ENCODE measurements at regions of chr6 and their contacts with region 1.

Region 1: GRCh38 chr6:33391278-33391921 is at the start of gene KIFC1:
- DNase-seq: peak; percentile 100
- ATAC-seq: peak; percentile 97
- H3K4me3 Mint-ChIP-seq: peak within 1 kb of the TSS; percentile 99
- H3K27ac Mint-ChIP-seq: peak within 1 kb of the TSS; percentile 96
- H3K4me1 Mint-ChIP-seq: peaks cover 45% of the 10 kb centered on the region
- H3K27me3 Mint-ChIP-seq: peaks cover 2% of the 10 kb centered on the region
- total RNA-seq, gene KIFC1: 175 to 180 TPM

Region 2: GRCh38 chr6:33317669-33318425 is 73.6 kb before region 1 on chr6 and contains the start of gene ZBTB22:
- CTCF ChIA-PET with region 1: interaction called, 11 read pairs
- POLR2A ChIA-PET with region 1: no interaction called
- DNase-seq: peak; percentile 98
- ATAC-seq: peak; percentile 70
- H3K4me3 Mint-ChIP-seq: peak within 1 kb of the TSS; percentile 97
- H3K27ac Mint-ChIP-seq: peak within 1 kb of the TSS; percentile 96
- H3K4me1 Mint-ChIP-seq: peaks cover 78% of the 10 kb centered on the region
- H3K27me3 Mint-ChIP-seq: no peaks in the 10 kb centered on the region
- total RNA-seq, gene ZBTB22: 10.7 to 11.1 TPM

Region 3: GRCh38 chr6:33344701-33345697 is 46.4 kb before region 1 on chr6:
- CTCF ChIA-PET with region 1: interaction called, 16 read pairs
- POLR2A ChIA-PET with region 1: no interaction called
- DNase-seq: peak; percentile 85
- ATAC-seq: peak; percentile 68
- H3K4me3 Mint-ChIP-seq: peak overlapping the region; percentile 69
- H3K27ac Mint-ChIP-seq: peak overlapping the region; percentile 94
- H3K4me1 Mint-ChIP-seq: peaks cover 40% of the 10 kb centered on the region
- H3K27me3 Mint-ChIP-seq: no peaks in the 10 kb centered on the region

Region 4: GRCh38 chr6:33375143-33375671 is 16.2 kb before region 1 on chr6:
- CTCF ChIA-PET with region 1: interaction called, 20 read pairs
- POLR2A ChIA-PET with region 1: no interaction called
- DNase-seq: no peak
- ATAC-seq: no peak
- H3K4me3 Mint-ChIP-seq: no peak overlapping the region
- H3K27ac Mint-ChIP-seq: no peak overlapping the region
- H3K4me1 Mint-ChIP-seq: peaks cover 31% of the 10 kb centered on the region
- H3K27me3 Mint-ChIP-seq: no peaks in the 10 kb centered on the region

Region 5: DNA sequence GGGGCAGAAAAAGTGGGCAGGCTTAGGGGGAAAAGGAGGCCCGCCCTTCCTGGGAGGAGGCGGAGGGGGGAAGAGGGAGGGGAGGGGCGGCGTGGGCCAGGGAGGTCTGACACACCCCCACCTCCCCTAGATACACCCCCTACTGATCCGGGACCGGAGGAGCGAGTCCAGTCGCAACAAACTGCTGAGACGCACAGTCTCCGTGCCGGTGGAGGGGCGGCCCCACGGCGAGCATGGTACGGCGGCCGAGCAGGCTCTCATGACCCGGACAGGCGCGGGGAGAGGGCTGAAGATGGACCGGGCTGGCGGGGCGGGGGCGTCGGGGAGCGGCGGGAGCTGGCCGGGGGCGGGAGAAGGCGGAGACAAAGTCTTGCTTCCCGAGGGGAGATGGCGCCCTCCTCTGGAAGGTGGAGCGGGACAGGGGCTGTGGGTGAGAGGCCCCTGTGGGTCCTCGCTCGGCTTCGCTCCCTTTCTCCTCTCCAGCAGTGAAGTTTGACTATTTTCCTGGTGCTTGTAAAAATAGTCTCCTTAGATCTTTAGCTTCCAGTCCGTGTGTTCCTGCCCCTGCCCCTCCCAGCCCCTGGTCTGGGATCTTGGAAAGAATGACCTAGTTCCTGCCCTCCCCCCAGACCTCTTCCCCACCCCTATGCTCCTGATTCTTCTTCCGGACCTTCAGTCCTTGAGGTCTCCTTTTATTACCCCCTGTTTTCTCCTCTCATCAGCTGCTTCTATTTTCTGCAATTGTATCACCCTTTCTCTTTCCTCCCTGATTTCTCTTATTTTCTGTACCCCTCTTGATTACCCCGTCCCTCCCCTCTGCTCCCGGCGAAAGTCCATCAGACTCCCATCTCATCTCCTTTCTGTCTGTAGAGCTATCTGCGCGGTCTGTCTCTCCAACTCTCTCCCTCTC is 34.5 kb after region 1 on chr6:
- CTCF ChIA-PET with region 1: interaction called, 11 read pairs
- POLR2A ChIA-PET with region 1: interaction called, 4 read pairs
- DNase-seq: peak; percentile 88
- ATAC-seq: peak; percentile 66
- H3K4me3 Mint-ChIP-seq: peak overlapping the region; percentile 88
- H3K27ac Mint-ChIP-seq: peak overlapping the region; percentile 89
- H3K4me1 Mint-ChIP-seq: peaks cover 68% of the 10 kb centered on the region
- H3K27me3 Mint-ChIP-seq: peaks cover 7% of the 10 kb centered on the region

Measured in activated CD8-positive, alpha-beta T cell treated with anti-CD3 and anti-CD28 coated beads, Interleukin-2, amount 10 ng/mL, durations not matched to agents 7 days and 5 days (primary cell).